RWPE1 (cell line): ENCODE measurements at regions of chr4 and their contacts with region 1.

Region 1: GRCh38 chr4:140720387-140721304 is 35.5 kb downstream of the TBC1D9 start:
- DNase-seq: no peak
- H3K27ac ChIP-seq: no peak overlapping the region
- CTCF ChIP-seq: no peak

Region 2: DNA sequence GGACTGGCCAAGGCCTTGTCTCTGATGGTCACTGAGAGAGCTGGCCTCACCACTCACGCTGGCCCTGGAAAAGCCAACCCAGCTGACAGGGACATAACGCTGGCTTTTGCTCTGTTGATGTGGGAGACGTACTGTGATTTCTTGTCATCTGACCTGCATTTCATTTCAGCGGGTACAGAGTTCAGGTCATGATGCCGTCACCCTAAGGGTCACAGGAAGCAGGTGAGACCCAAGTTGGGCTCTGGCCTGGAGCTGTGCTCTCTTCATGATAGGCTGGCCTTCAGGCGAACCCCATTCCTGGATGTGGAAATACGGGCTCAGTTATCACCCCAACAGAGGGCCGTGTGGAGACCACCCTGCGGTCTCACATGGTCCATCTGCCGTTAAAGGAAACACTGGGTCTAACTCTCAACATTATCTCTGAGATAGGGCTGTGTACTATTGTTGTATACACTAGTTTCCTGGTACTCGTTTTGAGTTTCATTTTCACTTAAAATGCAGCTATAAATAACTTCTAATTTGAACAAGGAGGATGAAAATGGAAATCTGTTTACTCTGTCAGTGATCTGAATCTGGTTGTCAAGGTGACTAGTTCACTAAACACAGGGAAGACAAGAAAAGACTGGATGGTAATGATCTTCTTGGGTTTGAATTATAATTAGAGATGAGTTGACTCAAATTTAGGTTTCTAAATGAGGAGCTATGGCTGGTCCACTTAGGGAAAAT is 53.6 kb before region 1 on chr4:
- CTCF ChIA-PET with region 1: interaction called, 11 read pairs
- POLR2A ChIA-PET with region 1: no interaction called
- DNase-seq: no peak
- H3K27ac ChIP-seq: no peak overlapping the region
- CTCF ChIP-seq: no peak

Region 3: DNA sequence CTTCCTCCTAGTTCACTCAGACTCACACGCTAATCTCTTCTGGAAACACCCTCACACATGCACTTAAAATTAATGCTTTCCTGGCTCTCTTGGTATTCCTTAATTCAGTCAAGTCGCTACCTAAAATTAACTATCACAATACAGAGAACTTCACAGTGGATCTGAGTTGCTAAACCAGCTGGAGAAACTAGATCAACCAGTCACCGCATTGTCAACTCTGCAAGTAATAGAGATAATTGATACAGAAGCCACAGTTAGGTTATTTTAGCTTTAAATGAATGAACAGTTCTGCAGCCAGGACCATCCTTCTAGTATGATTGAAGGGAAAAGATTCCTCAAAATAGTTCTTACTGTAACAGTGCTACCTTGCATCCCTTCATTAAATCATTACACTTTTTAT is 41.6 kb after region 1 on chr4:
- CTCF ChIA-PET with region 1: no interaction called
- POLR2A ChIA-PET with region 1: no interaction called
- DNase-seq: no peak
- H3K27ac ChIP-seq: no peak overlapping the region
- CTCF ChIP-seq: no peak

Region 4: DNA sequence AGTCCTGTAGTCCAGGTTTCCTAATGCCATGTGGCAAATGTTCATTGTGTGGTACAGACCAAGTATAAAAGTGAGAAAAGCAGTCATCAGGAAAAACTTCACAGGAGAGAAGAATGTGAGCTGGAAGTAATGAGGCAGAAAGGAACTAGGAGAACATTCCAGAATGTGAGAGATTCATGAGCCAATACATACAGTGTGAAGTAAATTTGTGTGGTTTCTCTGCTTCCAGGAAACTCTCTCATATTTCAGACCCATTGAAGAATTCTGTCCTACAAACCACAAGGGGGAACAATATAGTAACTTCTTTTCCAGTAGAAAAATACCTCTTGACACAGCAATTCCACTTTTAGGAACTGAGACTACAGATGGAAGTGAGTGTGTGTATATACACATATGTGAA is 276.1 kb after region 1 on chr4:
- CTCF ChIA-PET with region 1: no interaction called
- POLR2A ChIA-PET with region 1: no interaction called
- DNase-seq: no peak
- H3K27ac ChIP-seq: no peak overlapping the region
- CTCF ChIP-seq: no peak